Activated CD8-positive, alpha-beta T cell treated with anti-CD3 and anti-CD28 coated beads, Interleukin-2, amount 10 ng/mL, durations not matched to agents 7 days and 5 days (primary cell): ENCODE measurements at regions of chr13 and their contacts with region 1.

Region 1: DNA sequence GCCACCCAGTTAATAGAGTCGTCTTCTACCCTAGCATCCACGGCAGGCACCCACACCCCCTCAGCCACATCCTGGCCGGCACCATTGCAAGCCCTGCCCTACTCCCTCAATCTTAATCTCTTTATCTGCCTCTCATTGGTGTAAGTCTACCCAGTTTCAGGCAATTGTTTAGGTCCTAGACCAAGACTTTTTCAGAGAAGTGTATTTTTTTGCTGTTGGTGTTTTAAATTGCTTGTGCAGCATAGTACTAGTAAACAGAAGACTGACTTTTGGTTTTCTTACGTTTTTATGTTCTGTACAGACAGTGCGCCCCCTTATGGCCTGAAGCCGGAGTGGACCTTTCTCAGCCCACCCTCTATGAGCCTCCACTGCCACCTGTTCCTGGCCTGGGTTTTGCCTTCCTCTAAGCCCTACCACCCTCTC is 2.3 kb upstream of the LCP1 start:
- DNase-seq: peak; percentile 89
- ATAC-seq: peak; percentile 66
- H3K4me3 Mint-ChIP-seq: peak overlapping the region; percentile 90
- H3K27ac Mint-ChIP-seq: peak overlapping the region; percentile 98
- H3K4me1 Mint-ChIP-seq: peaks cover 38% of the 10 kb centered on the region
- H3K27me3 Mint-ChIP-seq: no peaks in the 10 kb centered on the region

Region 2: DNA sequence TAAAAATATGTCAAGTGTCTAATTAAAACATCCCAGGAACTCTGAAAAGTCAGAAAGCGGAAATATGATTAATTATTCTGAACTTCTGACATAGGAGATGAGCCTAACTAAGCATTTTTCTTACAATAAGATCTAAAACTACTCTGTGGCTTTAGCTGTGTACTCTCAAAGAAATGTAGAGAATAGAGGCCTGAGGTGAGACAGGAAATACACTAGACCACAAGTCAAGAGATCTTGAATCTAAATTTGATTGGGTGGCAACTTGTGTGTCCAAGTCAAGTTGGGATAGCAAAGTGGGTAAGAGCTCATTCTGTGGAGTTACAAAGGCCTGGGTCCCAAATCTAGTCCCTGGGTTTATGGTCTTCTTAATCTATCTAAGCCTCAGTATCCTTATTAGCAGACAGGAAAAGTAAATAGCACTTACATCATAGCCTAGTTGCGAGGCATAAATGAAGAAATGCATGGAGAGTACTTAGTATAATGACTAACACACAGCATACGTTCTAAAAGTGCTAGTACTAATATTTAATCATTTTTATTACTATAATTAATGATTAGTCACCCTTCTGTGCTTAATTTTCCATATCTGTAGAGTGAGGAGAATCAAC is 18.0 kb after region 1 on chr13:
- CTCF ChIA-PET with region 1: interaction called, 18 read pairs
- POLR2A ChIA-PET with region 1: interaction called, 11 read pairs
- DNase-seq: peak; percentile 40
- ATAC-seq: peak; percentile 85
- H3K4me3 Mint-ChIP-seq: peak overlapping the region; percentile 47
- H3K27ac Mint-ChIP-seq: peak overlapping the region; percentile 89
- H3K4me1 Mint-ChIP-seq: peaks cover 60% of the 10 kb centered on the region
- H3K27me3 Mint-ChIP-seq: no peaks in the 10 kb centered on the region

Region 3: GRCh38 chr13:46211483-46212351 is 27.4 kb after region 1 on chr13 and contains the start of gene LRRC63:
- CTCF ChIA-PET with region 1: interaction called, 11 read pairs
- POLR2A ChIA-PET with region 1: interaction called, 20 read pairs
- DNase-seq: peak; percentile 90
- ATAC-seq: peak; percentile 99
- H3K4me3 Mint-ChIP-seq: peak within 1 kb of the TSS; percentile 88
- H3K27ac Mint-ChIP-seq: peak within 1 kb of the TSS; percentile 93
- H3K4me1 Mint-ChIP-seq: peaks cover 41% of the 10 kb centered on the region
- H3K27me3 Mint-ChIP-seq: no peaks in the 10 kb centered on the region
- total RNA-seq, gene LRRC63: 1.7 to 2.2 TPM

Region 4: GRCh38 chr13:46295491-46296114 is 111.3 kb after region 1 on chr13:
- CTCF ChIA-PET with region 1: interaction called, 6 read pairs
- POLR2A ChIA-PET with region 1: interaction called, 15 read pairs
- DNase-seq: peak; percentile 83
- ATAC-seq: peak; percentile 92
- H3K4me3 Mint-ChIP-seq: peak overlapping the region; percentile 68
- H3K27ac Mint-ChIP-seq: peak overlapping the region; percentile 98
- H3K4me1 Mint-ChIP-seq: peaks cover 46% of the 10 kb centered on the region
- H3K27me3 Mint-ChIP-seq: no peaks in the 10 kb centered on the region

Region 5: GRCh38 chr13:46934749-46935148 is 750.5 kb after region 1 on chr13:
- CTCF ChIA-PET with region 1: no interaction called
- POLR2A ChIA-PET with region 1: no interaction called
- DNase-seq: no peak
- ATAC-seq: no peak
- H3K4me3 Mint-ChIP-seq: no peak overlapping the region
- H3K27ac Mint-ChIP-seq: no peak overlapping the region
- H3K4me1 Mint-ChIP-seq: no peaks in the 10 kb centered on the region
- H3K27me3 Mint-ChIP-seq: peaks cover 2% of the 10 kb centered on the region